ENCODE measurements at regions of chr17 and their contacts with region 1.

Region 1: DNA sequence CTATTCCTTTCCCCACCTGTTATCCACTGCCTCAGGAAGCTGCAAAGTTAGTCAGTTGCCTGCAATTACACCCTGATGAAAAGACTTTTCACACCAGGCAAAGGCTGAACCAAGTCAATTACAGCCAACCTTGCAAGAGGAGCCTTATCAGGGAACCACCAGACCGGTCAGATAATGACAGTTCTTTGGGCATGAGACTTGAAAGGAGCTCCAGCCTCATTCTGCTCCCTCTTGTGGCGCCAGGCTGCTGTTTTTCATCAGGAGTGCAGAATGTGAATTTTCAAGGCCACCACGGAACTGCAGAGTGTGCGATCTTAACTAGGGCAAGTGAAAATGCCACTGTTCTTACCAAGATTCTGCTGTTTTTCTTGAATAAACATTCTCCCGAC is 22.5 kb downstream of the DNAI2 start:
- DNase-seq: peak; percentile 82 to 96 (median 85)
- ATAC-seq: peak; percentile 89
- H3K4me3 ChIP-seq: peak overlapping the region; percentile 10; the same call in 1 of the 2 replicates
- H3K27ac ChIP-seq: peak overlapping the region; percentile 91
- H3K4me1 ChIP-seq: peaks cover 14 to 21% of the 10 kb centered on the region in 2 experiments; a peak in 4 of 5 replicates
- H3K27me3 ChIP-seq: no peaks in the 10 kb centered on the region
- CTCF ChIP-seq: peak; percentile 87 to 91 (median 90)
- EP300 ChIP-seq: peak; percentile 81
- POLR2A ChIP-seq: no peak
- RAD21 ChIP-seq: peak; percentile 89 to 92

Region 2: GRCh38 chr17:74354123-74354522 is 57.6 kb after region 1 on chr17:
- CTCF ChIA-PET with region 1: interaction called, 21 read pairs
- POLR2A ChIA-PET with region 1: no interaction called
- in situ Hi-C with region 1: loop called (anchors 5 kb)
- intact Hi-C with region 1: no loop called
- DNase-seq: peak; percentile 74 to 84 (median 84)
- ATAC-seq: peak; percentile 95
- H3K4me3 ChIP-seq: no peak overlapping the region
- H3K27ac ChIP-seq: no peak overlapping the region
- H3K4me1 ChIP-seq: peaks cover 0 to 43% of the 10 kb centered on the region in 2 experiments; a peak in 2 of 5 replicates
- H3K27me3 ChIP-seq: peaks cover 25 to 79% of the 10 kb centered on the region in 2 experiments; a peak in 4 of 5 replicates
- CTCF ChIP-seq: peak; percentile 97 to 100 (median 100)
- EP300 ChIP-seq: no peak
- POLR2A ChIP-seq: no peak
- RAD21 ChIP-seq: peak; percentile 77 to 96

Region 3: DNA sequence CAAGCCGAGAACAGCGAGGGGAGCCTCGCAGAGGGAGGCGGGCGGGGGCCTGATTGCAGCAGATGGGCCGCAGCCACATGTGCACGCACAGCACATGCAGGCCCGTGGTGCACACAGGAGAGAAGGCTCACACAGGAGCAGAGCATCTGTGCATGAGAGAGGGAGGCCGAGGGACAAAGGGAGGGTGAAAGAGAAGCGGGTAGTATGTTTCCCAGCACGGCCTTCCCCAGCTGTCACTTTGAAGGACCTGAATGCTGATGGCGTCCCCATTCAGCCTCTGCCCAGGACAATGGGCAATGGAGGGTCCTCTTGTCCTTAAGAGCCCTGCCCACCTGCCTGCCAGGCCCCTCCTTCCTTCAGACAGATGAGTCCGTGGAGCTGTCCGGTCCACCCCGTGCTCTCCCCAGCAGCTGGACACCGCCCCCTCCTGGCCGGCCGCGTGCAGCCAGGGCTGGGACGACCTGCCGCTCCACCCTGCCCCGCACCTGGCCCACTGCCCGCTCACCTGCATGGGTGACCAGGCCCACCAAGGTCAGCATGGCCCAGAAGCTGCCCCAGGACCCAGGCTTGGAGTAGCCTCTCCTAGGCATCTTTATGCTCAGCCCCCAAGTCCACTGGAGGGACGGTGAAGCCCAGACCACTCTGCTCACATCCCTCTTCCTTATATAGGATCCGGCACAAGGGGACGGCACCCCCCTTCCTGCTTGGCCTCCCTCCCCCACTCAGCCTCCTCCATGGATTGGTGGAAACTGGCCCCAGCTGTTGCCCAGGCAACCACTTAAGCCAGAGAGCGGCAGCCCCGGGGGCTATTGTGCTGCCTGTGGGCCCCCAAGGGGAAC is 64.9 kb after region 1 on chr17 and contains the start of gene BTBD17:
- CTCF ChIA-PET with region 1: interaction called, 9 read pairs
- POLR2A ChIA-PET with region 1: interaction called, 3 read pairs
- in situ Hi-C with region 1: no loop called
- intact Hi-C with region 1: loop called (anchors 1 kb)
- DNase-seq: peak; percentile 67 to 83 (median 82)
- ATAC-seq: peak; percentile 99
- H3K4me3 ChIP-seq: no peak within 1 kb of the TSS
- H3K27ac ChIP-seq: no peak within 1 kb of the TSS
- H3K4me1 ChIP-seq: peaks cover 0 to 31% of the 10 kb centered on the region in 2 experiments; a peak in 2 of 5 replicates
- H3K27me3 ChIP-seq: peaks cover 14 to 62% of the 10 kb centered on the region in 2 experiments; a peak in 3 of 5 replicates
- CTCF ChIP-seq: peak; percentile 79 to 88 (median 86)
- EP300 ChIP-seq: no peak
- POLR2A ChIP-seq: no peak
- RAD21 ChIP-seq: peak; percentile 85 to 91
- polyA plus RNA-seq, gene BTBD17: not detected